T-cell (primary cell): ENCODE measurements at regions of chr3 and their contacts with region 1.

Region 1: GRCh38 chr3:141498598-141499223 is 11.9 kb downstream of the RASA2 start:
- DNase-seq: peak; percentile 55 to 97 (median 86)
- ATAC-seq: peak; percentile 92 to 96 (median 94)
- H3K4me3 ChIP-seq: peak overlapping the region; percentile 23 to 66
- H3K4me3 Mint-ChIP-seq: peak overlapping the region; percentile 61 to 77 (median 76)
- H3K27ac ChIP-seq: peak overlapping the region; percentile 91
- H3K27ac Mint-ChIP-seq: peak overlapping the region; percentile 95
- H3K4me1 ChIP-seq: peaks cover 33 to 76% of the 10 kb centered on the region in 2 experiments
- H3K4me1 Mint-ChIP-seq: peaks cover 35 to 72% (median 68%) of the 10 kb centered on the region in 3 donors
- H3K27me3 ChIP-seq: no peaks in the 10 kb centered on the region
- H3K27me3 Mint-ChIP-seq: no peaks in the 10 kb centered on the region

Region 2: GRCh38 chr3:141487521-141488252 is 11.0 kb before region 1 on chr3:
- CTCF ChIA-PET with region 1: interaction called in 1 of 2 experiments, 20 read pairs
- POLR2A ChIA-PET with region 1: interaction called, 5 to 25 read pairs
- DNase-seq: peak; percentile 75 to 91 (median 85)
- ATAC-seq: peak; percentile 69 to 75 (median 74)
- H3K4me3 ChIP-seq: peak overlapping the region; percentile 84
- H3K4me3 Mint-ChIP-seq: peak overlapping the region; percentile 80 to 92 (median 87)
- H3K27ac ChIP-seq: peak overlapping the region; percentile 88
- H3K27ac Mint-ChIP-seq: peak overlapping the region; percentile 97
- H3K4me1 ChIP-seq: peaks cover 33 to 52% of the 10 kb centered on the region in 2 experiments
- H3K4me1 Mint-ChIP-seq: peaks cover 67 to 78% (median 76%) of the 10 kb centered on the region in 3 donors
- H3K27me3 ChIP-seq: no peaks in the 10 kb centered on the region
- H3K27me3 Mint-ChIP-seq: no peaks in the 10 kb centered on the region